ENCODE measurements at regions of chr1 and their contacts with region 1.

Region 1: GRCh38 chr1:2174348-2175054 is 20.1 kb downstream of the FAAP20 start:
- H3K4me3 ChIP-seq: no peak overlapping the region
- H3K27ac ChIP-seq: no peak overlapping the region
- H3K4me1 ChIP-seq: no peaks in the 10 kb centered on the region
- CTCF ChIP-seq: peak; percentile 82

Region 2: DNA sequence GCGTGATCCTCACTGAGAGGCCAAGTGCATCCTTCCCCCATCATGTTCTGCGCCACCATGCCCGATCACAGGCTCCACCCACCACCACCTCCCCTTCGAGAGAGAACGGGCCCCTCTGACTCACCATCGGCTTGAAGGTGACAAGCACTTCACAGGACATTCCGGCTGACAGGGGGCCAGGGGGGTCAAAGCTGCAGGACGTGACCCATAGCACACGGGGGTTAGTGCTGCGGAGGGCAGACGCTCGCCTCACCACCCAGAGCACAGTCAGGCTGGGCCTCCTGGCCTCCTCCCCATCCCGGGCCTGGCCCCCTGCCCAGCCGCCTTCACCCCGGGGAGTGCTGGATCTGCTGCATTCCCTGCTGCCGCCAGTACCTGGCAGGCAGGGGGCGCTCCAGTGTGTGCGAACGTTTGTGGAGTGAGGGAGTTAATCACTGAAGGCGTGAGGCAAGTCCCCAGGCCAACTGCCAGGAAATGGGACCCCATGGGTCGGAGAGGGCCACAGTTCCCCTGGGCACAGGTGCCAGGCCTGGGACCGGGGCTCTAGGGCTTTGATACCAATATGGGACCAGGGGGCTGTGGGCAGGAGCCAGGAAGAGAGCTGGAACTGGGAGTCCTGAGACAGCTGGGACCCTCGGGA is 214.5 kb before region 1 on chr1:
- CTCF ChIA-PET with region 1: interaction called, 15 read pairs
- POLR2A ChIA-PET with region 1: interaction called, 3 read pairs
- H3K4me3 ChIP-seq: peak overlapping the region; percentile 6
- H3K27ac ChIP-seq: no peak overlapping the region
- H3K4me1 ChIP-seq: no peaks in the 10 kb centered on the region
- CTCF ChIP-seq: peak; percentile 92

Region 3: GRCh38 chr1:2108213-2108876 is 66.2 kb before region 1 on chr1:
- CTCF ChIA-PET with region 1: interaction called, 12 read pairs
- POLR2A ChIA-PET with region 1: no interaction called
- H3K4me3 ChIP-seq: no peak overlapping the region
- H3K27ac ChIP-seq: no peak overlapping the region
- H3K4me1 ChIP-seq: no peaks in the 10 kb centered on the region
- CTCF ChIP-seq: peak; percentile 33

Region 4: GRCh38 chr1:2135441-2135841 is 39.1 kb before region 1 on chr1:
- CTCF ChIA-PET with region 1: interaction called, 28 read pairs
- POLR2A ChIA-PET with region 1: interaction called, 3 read pairs
- H3K4me3 ChIP-seq: no peak overlapping the region
- H3K27ac ChIP-seq: no peak overlapping the region
- H3K4me1 ChIP-seq: peaks cover 3% of the 10 kb centered on the region
- CTCF ChIP-seq: no peak

Region 5: GRCh38 chr1:2163205-2163604 is 11.3 kb before region 1 on chr1:
- CTCF ChIA-PET with region 1: interaction called, 37 read pairs
- POLR2A ChIA-PET with region 1: no interaction called
- H3K4me3 ChIP-seq: no peak overlapping the region
- H3K27ac ChIP-seq: no peak overlapping the region
- H3K4me1 ChIP-seq: no peaks in the 10 kb centered on the region
- CTCF ChIP-seq: no peak

Region 6: GRCh38 chr1:2189459-2190425 is 15.2 kb after region 1 on chr1:
- CTCF ChIA-PET with region 1: interaction called, 14 read pairs
- POLR2A ChIA-PET with region 1: interaction called, 4 read pairs
- H3K4me3 ChIP-seq: no peak overlapping the region
- H3K27ac ChIP-seq: peak overlapping the region; percentile 65
- H3K4me1 ChIP-seq: no peaks in the 10 kb centered on the region
- CTCF ChIP-seq: 0 out of 2 replicates have a peak, but pooled peaks have one; percentile 14